HepG2 (cell line): ENCODE measurements at regions of chr3 and their contacts with region 1.

Region 1: GRCh38 chr3:15064835-15065549 is at the start of gene MRPS25:
- DNase-seq: peak; percentile 83
- ATAC-seq: peak; percentile 95
- H3K4me3 ChIP-seq: peak within 1 kb of the TSS; percentile 84 to 88 (median 87)
- H3K27ac ChIP-seq: peak within 1 kb of the TSS; percentile 77
- H3K4me1 ChIP-seq: peaks cover 25% of the 10 kb centered on the region
- H3K27me3 ChIP-seq: no peaks in the 10 kb centered on the region; a peak in 1 of 5 replicates
- CTCF ChIP-seq: no peak
- EP300 ChIP-seq: no peak
- POLR2A ChIP-seq: peak; percentile 95 to 99
- RAD21 ChIP-seq: no peak
- total RNA-seq, gene MRPS25: 69.2 and 74.3 TPM in 2 replicates

Region 2: DNA sequence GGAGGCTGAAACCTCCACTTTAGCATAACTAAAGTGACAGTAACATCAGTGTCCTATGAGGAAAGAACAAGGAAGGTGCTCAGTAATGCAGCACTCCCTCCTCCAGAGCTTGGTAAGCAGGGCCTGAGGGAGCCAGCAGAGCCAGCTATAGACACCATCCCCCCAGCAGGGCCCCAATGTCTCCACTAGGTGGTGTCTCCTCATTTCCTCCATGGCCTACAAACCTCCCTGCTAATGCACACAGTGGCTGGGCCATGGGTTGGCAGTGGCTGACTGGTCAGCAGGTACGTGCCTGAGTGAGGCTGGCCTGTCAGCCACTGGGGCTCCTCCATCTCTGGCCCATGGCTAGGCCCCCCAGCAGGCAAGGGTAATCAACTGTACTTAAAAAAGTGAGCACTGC is 13.5 kb before region 1 on chr3:
- CTCF ChIA-PET with region 1: no interaction called
- POLR2A ChIA-PET with region 1: interaction called, 13 read pairs
- in situ Hi-C with region 1: no loop called
- intact Hi-C with region 1: no loop called
- DNase-seq: peak; percentile 62
- ATAC-seq: peak; percentile 99
- H3K4me3 ChIP-seq: no peak overlapping the region
- H3K27ac ChIP-seq: no peak overlapping the region
- H3K4me1 ChIP-seq: peaks cover 9% of the 10 kb centered on the region; the same call in 1 of the 2 replicates
- H3K27me3 ChIP-seq: no peaks in the 10 kb centered on the region
- CTCF ChIP-seq: peak; percentile 75
- EP300 ChIP-seq: no peak
- POLR2A ChIP-seq: no peak; a peak in 1 of 4 replicates
- RAD21 ChIP-seq: peak; percentile 56

Region 3: DNA sequence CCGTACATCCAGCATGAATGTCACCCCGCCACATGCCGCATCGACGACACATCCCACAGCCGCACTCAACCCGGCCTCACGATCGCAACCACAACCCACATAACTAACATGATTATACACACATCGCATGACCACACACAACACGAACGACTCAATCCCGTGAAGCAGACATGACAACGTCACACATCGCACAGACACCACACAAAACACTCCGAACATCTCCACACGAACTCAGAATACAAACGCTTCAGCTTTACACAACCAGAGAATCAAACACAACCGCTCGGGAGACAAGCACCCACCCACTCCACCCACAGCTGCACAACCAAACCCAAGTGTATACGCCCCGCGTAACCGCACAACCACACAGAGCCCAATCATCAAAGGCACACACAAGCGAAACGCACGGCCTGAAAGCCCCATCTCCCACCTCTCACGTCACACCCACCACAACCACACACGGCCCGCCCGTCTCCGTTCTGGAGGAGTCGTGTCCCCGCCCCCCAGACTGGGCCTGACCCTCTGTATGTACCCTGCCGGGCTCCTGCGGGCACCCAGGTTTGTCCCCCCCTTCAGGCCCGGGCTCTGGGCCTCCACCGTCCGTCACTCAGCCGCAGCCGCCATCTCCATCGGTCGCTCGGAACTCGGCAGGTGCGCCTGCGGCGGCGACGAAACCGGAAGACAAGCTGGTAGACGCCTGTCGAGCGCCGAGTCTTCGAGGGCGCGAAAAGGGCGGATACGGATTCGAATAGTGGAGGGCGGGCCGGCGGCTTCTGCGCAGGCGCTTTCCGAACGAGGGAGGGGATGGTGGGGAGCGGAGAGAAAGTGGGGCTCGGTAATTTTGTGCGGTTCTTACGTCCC is 33.7 kb after region 1 on chr3 and contains the start of gene RBSN:
- CTCF ChIA-PET with region 1: no interaction called
- POLR2A ChIA-PET with region 1: interaction called, 14 read pairs
- in situ Hi-C with region 1: no loop called
- intact Hi-C with region 1: no loop called
- DNase-seq: peak; percentile 88
- ATAC-seq: peak; percentile 87
- H3K4me3 ChIP-seq: peak within 1 kb of the TSS; percentile 82 to 96 (median 93)
- H3K27ac ChIP-seq: peak within 1 kb of the TSS; percentile 70
- H3K4me1 ChIP-seq: peaks cover 35% of the 10 kb centered on the region
- H3K27me3 ChIP-seq: peaks cover 0 to 1% of the 10 kb centered on the region in 2 experiments; a peak in 2 of 5 replicates
- CTCF ChIP-seq: peak; percentile 23; the same call in 1 of the 2 replicates
- EP300 ChIP-seq: peak in 1 of 2 experiments; percentile 55; a peak in 1 of 4 replicates
- POLR2A ChIP-seq: peak; percentile 43 to 81
- RAD21 ChIP-seq: peak; percentile 40; the same call in 1 of the 2 replicates
- total RNA-seq, gene RBSN: 11.8 and 14.7 TPM in 2 replicates

Region 4: GRCh38 chr3:15148614-15149013 is 83.6 kb after region 1 on chr3:
- CTCF ChIA-PET with region 1: no interaction called
- POLR2A ChIA-PET with region 1: no interaction called
- in situ Hi-C with region 1: no loop called
- intact Hi-C with region 1: no loop called
- DNase-seq: peak; percentile 69
- ATAC-seq: peak; percentile 100
- H3K4me3 ChIP-seq: peak overlapping the region in 1 of 3 experiments; percentile 51; a peak in 2 of 6 replicates
- H3K27ac ChIP-seq: no peak overlapping the region
- H3K4me1 ChIP-seq: peaks cover 9% of the 10 kb centered on the region
- H3K27me3 ChIP-seq: no peaks in the 10 kb centered on the region; a peak in 1 of 5 replicates
- CTCF ChIP-seq: peak; percentile 58
- EP300 ChIP-seq: no peak
- POLR2A ChIP-seq: no peak
- RAD21 ChIP-seq: no peak